Activated CD8-positive, alpha-beta T cell treated with anti-CD3 and anti-CD28 coated beads for 36 hours (primary cell): ENCODE measurements at regions of chr17 and their contacts with region 1.

Region 1: GRCh38 chr17:48351831-48352332 is 78.1 kb downstream of the SKAP1 start:
- DNase-seq: no peak
- ATAC-seq: peak; percentile 53
- H3K4me3 Mint-ChIP-seq: no peak overlapping the region
- H3K27ac Mint-ChIP-seq: no peak overlapping the region
- H3K4me1 Mint-ChIP-seq: peaks cover 6% of the 10 kb centered on the region
- H3K27me3 Mint-ChIP-seq: no peaks in the 10 kb centered on the region
- CTCF ChIP-seq: peak; percentile 84

Region 2: GRCh38 chr17:48301002-48301401 is 50.9 kb before region 1 on chr17:
- CTCF ChIA-PET with region 1: no interaction called
- POLR2A ChIA-PET with region 1: no interaction called
- intact Hi-C with region 1: no loop called
- DNase-seq: no peak
- ATAC-seq: no peak
- H3K4me3 Mint-ChIP-seq: no peak overlapping the region
- H3K27ac Mint-ChIP-seq: peak overlapping the region; percentile 36
- H3K4me1 Mint-ChIP-seq: peaks cover 61% of the 10 kb centered on the region
- H3K27me3 Mint-ChIP-seq: no peaks in the 10 kb centered on the region
- CTCF ChIP-seq: no peak

Region 3: DNA sequence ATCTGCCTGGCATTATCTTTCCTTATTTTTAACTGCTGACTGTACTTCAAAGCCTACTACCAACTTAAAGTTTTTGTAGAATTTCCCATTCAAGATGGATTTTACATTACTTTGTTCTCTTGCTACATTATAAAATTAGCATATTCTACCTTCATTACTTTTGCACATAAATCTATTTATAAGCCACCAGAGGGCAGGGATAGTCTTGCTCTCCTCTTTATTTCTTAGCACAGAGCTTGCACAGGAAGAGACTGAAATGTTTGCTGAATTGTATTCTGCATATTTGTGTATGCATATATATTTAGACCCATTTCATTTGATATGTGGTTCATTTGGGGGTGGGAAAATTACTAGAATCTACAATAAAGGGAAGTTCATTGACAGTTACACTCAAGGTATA is 29.8 kb before region 1 on chr17:
- CTCF ChIA-PET with region 1: no interaction called
- POLR2A ChIA-PET with region 1: no interaction called
- intact Hi-C with region 1: no loop called
- DNase-seq: no peak
- ATAC-seq: no peak
- H3K4me3 Mint-ChIP-seq: no peak overlapping the region
- H3K27ac Mint-ChIP-seq: no peak overlapping the region
- H3K4me1 Mint-ChIP-seq: peaks cover 11% of the 10 kb centered on the region
- H3K27me3 Mint-ChIP-seq: no peaks in the 10 kb centered on the region
- CTCF ChIP-seq: no peak

Region 4: DNA sequence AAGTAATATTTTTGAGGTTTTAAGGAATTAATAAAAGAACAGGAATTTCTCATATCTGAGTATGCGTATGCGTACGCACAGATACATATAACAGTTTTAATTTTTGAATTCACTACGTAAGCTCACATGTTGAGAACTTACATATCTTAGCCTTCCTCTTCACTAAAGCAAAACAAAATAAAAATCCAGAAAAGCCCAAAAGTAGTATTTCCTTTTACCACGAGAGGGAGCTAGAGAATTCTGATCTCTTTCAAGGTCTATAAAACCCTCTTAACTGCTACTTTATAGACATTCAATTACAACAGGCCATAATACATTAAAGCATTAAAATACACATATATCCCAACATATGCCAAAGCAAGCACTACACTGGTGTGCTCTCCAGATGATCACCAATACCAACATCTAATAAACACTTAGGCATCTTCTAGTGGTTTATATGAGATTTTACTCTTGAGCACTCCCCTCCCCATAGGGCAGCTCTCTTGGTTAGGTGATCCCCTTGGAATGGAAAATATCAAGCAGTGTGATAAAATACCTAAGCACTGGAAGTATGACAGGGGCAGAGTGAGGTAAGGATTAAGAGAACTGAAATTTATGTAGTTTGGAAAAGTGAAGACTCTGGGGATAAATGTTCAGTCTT is 15.9 kb before region 1 on chr17:
- CTCF ChIA-PET with region 1: interaction called, 63 read pairs
- POLR2A ChIA-PET with region 1: no interaction called
- intact Hi-C with region 1: no loop called
- DNase-seq: no peak
- ATAC-seq: peak; percentile 61
- H3K4me3 Mint-ChIP-seq: no peak overlapping the region
- H3K27ac Mint-ChIP-seq: no peak overlapping the region
- H3K4me1 Mint-ChIP-seq: peaks cover 13% of the 10 kb centered on the region
- H3K27me3 Mint-ChIP-seq: no peaks in the 10 kb centered on the region
- CTCF ChIP-seq: peak; percentile 81

Region 5: DNA sequence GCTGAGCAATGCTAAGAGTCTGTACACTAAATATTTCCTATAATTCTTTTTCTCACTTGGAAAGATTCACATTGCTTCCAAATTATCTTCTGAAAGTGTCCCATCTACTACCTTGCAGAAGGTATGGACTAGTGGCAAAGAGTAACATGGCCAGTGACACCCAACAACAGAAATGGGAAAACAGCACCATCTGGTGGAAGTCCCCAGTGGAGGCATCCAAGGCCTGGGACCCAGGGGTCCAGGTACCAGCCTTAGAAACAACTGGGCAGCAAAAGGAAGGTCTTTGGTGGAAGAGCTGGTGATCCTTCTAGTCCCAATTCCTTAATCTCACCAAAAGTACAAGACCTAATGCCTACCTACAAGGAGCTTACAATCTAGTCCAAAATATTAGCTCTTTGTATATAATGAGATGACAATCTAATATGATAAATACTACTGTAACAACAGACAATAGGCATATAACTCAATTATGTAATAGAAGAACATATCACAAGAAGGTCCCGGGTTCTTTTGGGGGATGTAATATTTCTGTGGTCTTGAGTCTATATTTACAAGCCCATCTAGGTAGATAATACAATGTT is 22.9 kb after region 1 on chr17:
- CTCF ChIA-PET with region 1: interaction called, 18 read pairs
- POLR2A ChIA-PET with region 1: no interaction called
- intact Hi-C with region 1: no loop called
- DNase-seq: peak; percentile 50
- ATAC-seq: peak; percentile 71
- H3K4me3 Mint-ChIP-seq: no peak overlapping the region
- H3K27ac Mint-ChIP-seq: no peak overlapping the region
- H3K4me1 Mint-ChIP-seq: peaks cover 26% of the 10 kb centered on the region
- H3K27me3 Mint-ChIP-seq: no peaks in the 10 kb centered on the region
- CTCF ChIP-seq: peak; percentile 58

Region 6: GRCh38 chr17:48462946-48463345 is 111.1 kb after region 1 on chr17:
- CTCF ChIA-PET with region 1: interaction called, 43 read pairs
- POLR2A ChIA-PET with region 1: no interaction called
- intact Hi-C with region 1: loop called (anchors 5 kb)
- DNase-seq: no peak
- ATAC-seq: no peak
- H3K4me3 Mint-ChIP-seq: no peak overlapping the region
- H3K27ac Mint-ChIP-seq: no peak overlapping the region
- H3K4me1 Mint-ChIP-seq: peaks cover 6% of the 10 kb centered on the region
- H3K27me3 Mint-ChIP-seq: peaks cover 2% of the 10 kb centered on the region
- CTCF ChIP-seq: no peak

Region 7: GRCh38 chr17:48618256-48618897 is 266.5 kb after region 1 on chr17:
- CTCF ChIA-PET with region 1: interaction called, 13 read pairs
- POLR2A ChIA-PET with region 1: no interaction called
- intact Hi-C with region 1: no loop called
- DNase-seq: peak; percentile 83
- ATAC-seq: peak; percentile 69
- H3K4me3 Mint-ChIP-seq: peak overlapping the region; percentile 46
- H3K27ac Mint-ChIP-seq: no peak overlapping the region
- H3K4me1 Mint-ChIP-seq: peaks cover 32% of the 10 kb centered on the region
- H3K27me3 Mint-ChIP-seq: peaks cover 86% of the 10 kb centered on the region
- CTCF ChIP-seq: peak; percentile 99